Upper lobe of right lung (tissue), 1 donor: ENCODE measurements at regions of chr12 and their contacts with region 1.

Region 1: GRCh38 chr12:10190558-10191388 is 11.9 kb downstream of the TMEM52B start:
- DNase-seq: no peak
- ATAC-seq: peak; percentile 96
- H3K4me3 ChIP-seq: no peak overlapping the region
- H3K27ac ChIP-seq: no peak overlapping the region
- H3K4me1 ChIP-seq: peaks cover 9% of the 10 kb centered on the region
- H3K27me3 ChIP-seq: no peaks in the 10 kb centered on the region
- CTCF ChIP-seq: peak; percentile 88

Region 2: DNA sequence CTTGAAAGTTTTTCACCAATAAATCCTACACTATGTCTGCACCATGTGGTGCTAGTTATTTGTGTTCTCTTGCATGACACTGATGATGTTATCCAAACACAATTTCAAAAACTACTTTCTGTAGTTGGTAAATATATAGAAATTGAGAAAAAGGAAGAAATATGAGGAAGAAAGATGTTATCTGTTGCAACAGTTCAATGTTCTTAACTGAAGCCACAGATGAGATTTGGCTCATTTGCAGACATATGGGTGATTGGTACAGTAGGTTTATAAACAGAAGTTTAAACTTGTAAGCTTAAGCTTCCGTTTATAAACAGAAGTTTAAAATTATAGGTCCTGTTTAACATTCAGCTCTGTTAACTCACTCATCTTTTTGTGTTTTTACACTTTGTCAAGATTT is 219.6 kb before region 1 on chr12 and contains the start of gene CLEC12A:
- intact Hi-C with region 1: no loop called
- DNase-seq: no peak
- ATAC-seq: peak; percentile 60
- H3K4me3 ChIP-seq: peak within 1 kb of the TSS; percentile 34
- H3K27ac ChIP-seq: peak within 1 kb of the TSS; percentile 53
- H3K4me1 ChIP-seq: no peaks in the 10 kb centered on the region
- H3K27me3 ChIP-seq: no peaks in the 10 kb centered on the region
- CTCF ChIP-seq: no peak
- total RNA-seq, gene CLEC12A: 43.4 TPM

Region 3: GRCh38 chr12:10153271-10154144 is 37.3 kb before region 1 on chr12:
- intact Hi-C with region 1: loop called (anchors 5 kb)
- DNase-seq: peak; percentile 87
- ATAC-seq: peak; percentile 96
- H3K4me3 ChIP-seq: peak overlapping the region; percentile 63
- H3K27ac ChIP-seq: peak overlapping the region; percentile 78
- H3K4me1 ChIP-seq: peaks cover 7% of the 10 kb centered on the region
- H3K27me3 ChIP-seq: no peaks in the 10 kb centered on the region
- CTCF ChIP-seq: peak; percentile 76